OCI-LY7 (cell line): ENCODE measurements at regions of chr6 and their contacts with region 1.

Region 1: GRCh38 chr6:3162565-3163247 is 5.4 kb upstream of the TUBB2A start:
- DNase-seq: peak; percentile 82
- H3K4me3 ChIP-seq: peak overlapping the region; percentile 83
- H3K27ac ChIP-seq: peak overlapping the region; percentile 78
- H3K4me1 ChIP-seq: peaks cover 43% of the 10 kb centered on the region
- CTCF ChIP-seq: peak; percentile 27; the same call in 1 of the 2 replicates

Region 2: DNA sequence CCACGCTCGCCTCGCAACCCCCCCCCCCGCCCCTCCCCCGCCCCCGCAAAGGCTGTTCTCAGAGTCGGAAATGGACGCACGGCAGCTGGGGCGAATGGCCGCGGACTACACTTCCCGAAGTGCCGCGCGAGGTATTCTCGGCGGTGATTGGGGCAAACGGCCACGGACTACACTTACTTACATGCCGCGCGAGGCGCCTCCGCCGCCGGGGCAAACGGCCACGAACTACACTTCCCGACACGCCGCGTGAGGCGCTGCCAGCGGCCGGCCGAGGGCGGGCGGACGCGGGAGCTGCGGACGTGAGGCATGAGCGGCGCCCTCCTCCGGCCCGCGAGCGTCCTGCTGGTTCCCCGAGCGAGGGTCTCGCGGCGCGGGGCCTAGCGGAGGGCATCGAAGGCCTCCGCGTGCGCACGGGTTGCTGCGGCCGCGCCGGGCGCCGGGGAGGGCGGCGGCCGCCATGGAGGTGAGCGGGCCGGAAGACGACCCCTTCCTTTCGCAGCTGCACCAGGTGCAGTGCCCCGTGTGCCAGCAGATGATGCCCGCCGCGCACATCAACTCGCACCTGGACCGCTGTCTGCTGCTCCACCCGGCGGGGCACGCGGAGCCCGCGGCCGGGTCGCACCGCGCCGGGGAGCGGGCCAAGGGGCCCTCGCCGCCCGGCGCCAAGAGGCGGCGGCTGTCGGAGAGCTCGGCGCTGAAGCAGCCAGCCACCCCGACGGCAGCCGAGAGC is 397.4 kb before region 1 on chr6 and contains the start of gene WRNIP1:
- CTCF ChIA-PET with region 1: no interaction called
- POLR2A ChIA-PET with region 1: interaction called, 4 read pairs
- intact Hi-C with region 1: loop called (anchors 5 kb)
- DNase-seq: peak; percentile 99
- H3K4me3 ChIP-seq: peak within 1 kb of the TSS; percentile 91
- H3K27ac ChIP-seq: peak within 1 kb of the TSS; percentile 73
- H3K4me1 ChIP-seq: peaks cover 26% of the 10 kb centered on the region
- CTCF ChIP-seq: peak; percentile 70
- total RNA-seq, gene WRNIP1: 38.1 and 54.2 TPM in 2 replicates

Region 3: DNA sequence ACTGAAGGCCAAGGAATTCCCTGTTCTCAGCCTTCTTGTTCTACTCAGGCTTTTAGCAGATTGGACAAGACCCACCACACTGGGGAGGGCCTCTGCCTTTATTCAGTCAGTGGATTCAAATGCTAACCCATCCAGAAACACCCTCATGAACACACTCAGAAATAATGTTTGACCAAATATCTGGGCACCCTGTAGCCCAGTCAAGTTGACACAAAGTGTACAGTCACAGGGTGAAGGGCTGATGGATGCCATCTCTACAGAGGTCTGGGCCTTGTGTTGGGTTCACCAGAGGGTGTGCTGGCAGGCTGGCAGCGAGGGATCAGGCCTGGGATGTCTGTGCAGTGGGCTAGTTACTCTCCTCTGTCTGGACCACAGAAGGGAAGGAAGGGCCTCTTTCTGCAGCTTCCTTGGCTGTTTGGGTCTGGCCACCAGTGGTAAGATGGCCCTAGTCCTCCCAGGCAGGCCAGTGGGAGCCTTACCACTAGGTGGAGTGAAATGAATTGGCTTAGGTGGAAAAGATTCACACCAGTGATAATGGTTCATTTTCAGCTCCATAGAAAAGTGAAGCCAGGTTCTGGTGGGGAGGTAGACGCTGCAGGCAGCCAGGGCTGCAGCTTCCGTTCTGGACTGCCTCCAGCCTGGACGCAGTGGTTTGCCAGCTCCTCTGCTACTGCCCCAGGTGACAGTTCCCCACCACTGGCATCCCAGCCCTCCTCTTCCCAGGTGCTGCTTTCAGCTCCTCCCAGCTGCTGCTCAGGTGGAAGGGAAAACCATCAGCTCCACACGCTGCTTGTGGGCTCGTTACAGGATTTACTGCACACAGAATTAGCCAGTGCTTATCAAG is 14.6 kb before region 1 on chr6:
- CTCF ChIA-PET with region 1: interaction called, 7 read pairs
- POLR2A ChIA-PET with region 1: interaction called, 10 read pairs
- intact Hi-C with region 1: no loop called
- DNase-seq: no peak
- H3K4me3 ChIP-seq: no peak overlapping the region
- H3K27ac ChIP-seq: no peak overlapping the region
- H3K4me1 ChIP-seq: peaks cover 20% of the 10 kb centered on the region
- CTCF ChIP-seq: peak; percentile 37; the same call in 1 of the 2 replicates

Region 4: DNA sequence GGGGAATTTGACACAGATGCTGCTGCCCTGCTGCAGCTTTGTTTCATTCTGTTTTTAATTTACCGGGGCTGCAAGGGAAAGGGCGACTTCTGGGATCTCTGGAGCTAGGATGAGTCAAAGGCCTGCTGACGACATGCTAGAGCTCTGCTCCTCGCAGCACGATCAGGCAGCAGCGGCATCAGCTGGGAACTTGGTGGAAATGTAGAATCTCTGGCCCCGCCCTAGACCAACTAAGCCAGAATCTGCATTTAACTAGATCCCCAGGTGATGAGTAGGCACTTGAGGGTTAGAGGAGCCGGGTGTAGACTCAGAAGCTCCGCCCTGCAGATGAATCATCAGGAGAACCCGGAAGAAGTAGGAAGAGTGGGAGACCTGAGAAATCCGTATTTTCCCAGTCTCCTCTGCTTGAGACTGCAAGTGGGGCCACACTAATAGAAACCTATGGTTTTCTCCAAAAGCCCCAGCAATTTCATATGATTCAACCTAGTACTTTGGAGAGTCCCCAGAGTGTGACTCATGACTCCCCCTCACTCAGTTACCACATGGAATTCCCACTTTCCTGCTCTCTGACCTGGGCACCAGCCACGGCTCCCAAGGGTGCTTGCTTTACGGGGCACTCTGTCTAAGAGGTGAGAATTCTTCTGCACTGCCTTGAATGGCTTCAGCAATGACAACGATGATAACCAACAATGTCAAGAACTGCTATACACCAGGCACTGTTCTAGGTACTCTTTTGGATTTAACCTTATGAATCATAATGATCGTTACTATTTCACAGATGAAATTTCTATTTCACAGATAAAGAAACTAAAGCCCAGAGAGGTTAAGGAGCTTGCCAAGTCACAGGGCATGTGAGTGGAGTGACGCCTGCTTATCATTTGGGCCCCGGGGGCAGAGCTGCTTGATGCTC is 46.7 kb after region 1 on chr6:
- CTCF ChIA-PET with region 1: no interaction called
- POLR2A ChIA-PET with region 1: interaction called, 4 read pairs
- intact Hi-C with region 1: loop called (anchors 2 kb)
- DNase-seq: peak; percentile 42
- H3K4me3 ChIP-seq: no peak overlapping the region
- H3K27ac ChIP-seq: no peak overlapping the region
- H3K4me1 ChIP-seq: peaks cover 21% of the 10 kb centered on the region
- CTCF ChIP-seq: no peak

Region 5: GRCh38 chr6:3239110-3239830 is 76.6 kb after region 1 on chr6:
- CTCF ChIA-PET with region 1: interaction called, 3 read pairs
- POLR2A ChIA-PET with region 1: interaction called, 3 read pairs
- intact Hi-C with region 1: loop called (anchors 5 kb)
- DNase-seq: no peak
- H3K4me3 ChIP-seq: no peak overlapping the region
- H3K27ac ChIP-seq: no peak overlapping the region
- H3K4me1 ChIP-seq: peaks cover 24% of the 10 kb centered on the region
- CTCF ChIP-seq: no peak

Region 6: DNA sequence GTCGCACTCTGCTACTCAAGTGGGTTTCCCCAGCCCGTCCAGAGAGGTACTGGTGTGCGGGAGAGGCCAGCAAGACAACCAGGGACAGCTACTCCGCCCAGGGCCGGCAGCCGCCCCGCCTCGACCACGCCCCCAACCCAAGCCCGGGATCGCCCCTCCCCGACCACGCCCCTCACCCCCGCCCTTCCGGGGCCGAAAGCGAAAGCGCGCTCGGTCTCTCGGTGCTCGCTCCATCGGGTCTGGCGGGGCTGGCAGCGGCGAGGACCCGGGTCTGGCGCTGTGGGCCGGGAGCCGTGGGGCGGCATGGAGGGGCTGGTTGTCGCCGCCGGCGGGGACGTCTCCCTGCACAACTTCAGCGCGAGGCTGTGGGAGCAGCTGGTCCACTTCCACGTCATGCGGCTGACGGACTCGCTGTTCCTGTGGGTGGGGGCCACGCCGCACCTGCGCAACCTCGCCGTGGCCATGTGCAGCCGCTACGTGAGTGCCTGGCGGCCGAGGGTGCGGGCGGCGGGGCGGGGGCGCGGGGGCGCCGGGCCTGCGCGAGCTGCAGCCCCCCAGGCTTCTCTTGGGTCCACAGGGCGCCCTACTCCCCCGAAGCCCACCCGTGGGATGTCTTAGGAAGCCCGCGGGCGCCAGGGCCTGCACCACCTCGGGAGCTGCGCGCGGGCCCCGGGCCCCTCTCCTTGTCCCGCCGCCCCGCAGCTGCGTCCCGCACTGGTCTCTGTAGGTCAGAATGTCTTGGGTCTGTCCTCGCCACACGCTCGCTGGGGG is 96.2 kb after region 1 on chr6 and contains the start of gene PSMG4:
- CTCF ChIA-PET with region 1: no interaction called
- POLR2A ChIA-PET with region 1: interaction called, 7 read pairs
- intact Hi-C with region 1: loop called (anchors 2 kb)
- DNase-seq: peak; percentile 90
- H3K4me3 ChIP-seq: peak within 1 kb of the TSS; percentile 95
- H3K27ac ChIP-seq: peak within 1 kb of the TSS; percentile 49
- H3K4me1 ChIP-seq: peaks cover 15% of the 10 kb centered on the region
- CTCF ChIP-seq: no peak
- total RNA-seq, gene PSMG4: 58.3 and 65.4 TPM in 2 replicates